ENCODE measurements at regions of chr19 and their contacts with region 1.

Region 1: GRCh38 chr19:12639901-12640613 is 26.5 kb downstream of the MAN2B1 start:
- DNase-seq: peak; percentile 92
- ATAC-seq: peak; percentile 94
- H3K4me3 Mint-ChIP-seq: peak overlapping the region; percentile 71
- H3K27ac Mint-ChIP-seq: no peak overlapping the region; the same call in 1 of the 2 replicates
- H3K4me1 Mint-ChIP-seq: 0 out of 2 replicates have a peak, but pooled peaks cover 4% of the 10 kb centered on the region
- H3K27me3 Mint-ChIP-seq: peaks cover 16% of the 10 kb centered on the region; the same call in 1 of the 2 replicates
- CTCF ChIP-seq: peak; percentile 82

Region 2: GRCh38 chr19:12450844-12451243 is 189.2 kb before region 1 on chr19:
- CTCF ChIA-PET with region 1: no interaction called
- POLR2A ChIA-PET with region 1: interaction called, 10 read pairs
- DNase-seq: no peak
- ATAC-seq: no peak
- H3K4me3 Mint-ChIP-seq: no peak overlapping the region
- H3K27ac Mint-ChIP-seq: no peak overlapping the region
- H3K4me1 Mint-ChIP-seq: peaks cover 19% of the 10 kb centered on the region
- H3K27me3 Mint-ChIP-seq: peaks cover 17% of the 10 kb centered on the region
- CTCF ChIP-seq: no peak

Region 3: GRCh38 chr19:12610540-12611360 is 29.3 kb before region 1 on chr19 and contains the starts of genes ZNF490 and ZNF791:
- CTCF ChIA-PET with region 1: interaction called, 20 read pairs
- POLR2A ChIA-PET with region 1: interaction called, 4 read pairs
- DNase-seq: peak; percentile 97
- ATAC-seq: peak; percentile 97
- H3K4me3 Mint-ChIP-seq: peak within 1 kb of the TSS; percentile 97
- H3K27ac Mint-ChIP-seq: peak within 1 kb of the TSS; percentile 99
- H3K4me1 Mint-ChIP-seq: peaks cover 3% of the 10 kb centered on the region
- H3K27me3 Mint-ChIP-seq: no peaks in the 10 kb centered on the region
- CTCF ChIP-seq: no peak
- total RNA-seq, gene ZNF490: 7.3 to 7.7 TPM (median 7.6 TPM) in 3 replicates
- total RNA-seq, gene ZNF791: 21.4 to 25.9 TPM (median 23.9 TPM) in 3 replicates

Region 4: DNA sequence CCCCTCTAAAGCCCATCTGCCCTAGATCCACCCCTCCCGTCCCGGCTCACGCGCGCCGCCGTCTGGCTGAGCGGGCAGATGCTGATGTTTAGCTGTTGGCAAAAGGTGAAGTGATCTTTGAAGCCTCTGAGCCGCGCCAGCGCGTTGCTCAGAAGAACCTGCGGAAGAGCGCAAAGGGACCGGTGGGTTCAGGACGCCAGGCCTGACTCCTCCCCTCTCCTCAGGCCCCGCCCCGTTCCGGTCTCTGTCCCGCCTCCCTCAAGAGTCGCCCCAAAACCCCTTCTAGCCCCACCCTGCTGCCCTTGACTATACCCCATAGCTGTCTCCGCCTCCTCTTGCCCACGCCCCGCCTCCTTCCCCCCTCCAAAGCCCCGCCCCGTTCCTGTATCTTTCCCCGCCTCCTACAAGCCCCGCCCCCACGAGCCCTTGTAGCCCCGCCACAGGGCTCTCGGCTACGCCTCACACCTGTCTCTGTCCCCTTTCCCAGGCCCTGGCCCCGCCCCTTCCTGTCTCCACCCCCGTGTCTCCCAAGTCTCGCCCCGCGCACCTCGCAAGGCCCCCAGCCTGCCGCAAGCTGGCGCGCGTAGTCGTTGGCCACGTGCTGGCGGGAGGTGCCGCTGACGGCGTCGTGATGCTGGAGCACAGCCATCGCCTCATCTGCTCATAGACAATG is 17.0 kb after region 1 on chr19:
- CTCF ChIA-PET with region 1: interaction called, 27 read pairs
- POLR2A ChIA-PET with region 1: no interaction called
- DNase-seq: peak; percentile 98
- ATAC-seq: peak; percentile 98
- H3K4me3 Mint-ChIP-seq: peak overlapping the region; percentile 56
- H3K27ac Mint-ChIP-seq: peak overlapping the region; percentile 86
- H3K4me1 Mint-ChIP-seq: peaks cover 6% of the 10 kb centered on the region
- H3K27me3 Mint-ChIP-seq: no peaks in the 10 kb centered on the region
- CTCF ChIP-seq: peak; percentile 18; the same call in 1 of the 2 replicates

Region 5: DNA sequence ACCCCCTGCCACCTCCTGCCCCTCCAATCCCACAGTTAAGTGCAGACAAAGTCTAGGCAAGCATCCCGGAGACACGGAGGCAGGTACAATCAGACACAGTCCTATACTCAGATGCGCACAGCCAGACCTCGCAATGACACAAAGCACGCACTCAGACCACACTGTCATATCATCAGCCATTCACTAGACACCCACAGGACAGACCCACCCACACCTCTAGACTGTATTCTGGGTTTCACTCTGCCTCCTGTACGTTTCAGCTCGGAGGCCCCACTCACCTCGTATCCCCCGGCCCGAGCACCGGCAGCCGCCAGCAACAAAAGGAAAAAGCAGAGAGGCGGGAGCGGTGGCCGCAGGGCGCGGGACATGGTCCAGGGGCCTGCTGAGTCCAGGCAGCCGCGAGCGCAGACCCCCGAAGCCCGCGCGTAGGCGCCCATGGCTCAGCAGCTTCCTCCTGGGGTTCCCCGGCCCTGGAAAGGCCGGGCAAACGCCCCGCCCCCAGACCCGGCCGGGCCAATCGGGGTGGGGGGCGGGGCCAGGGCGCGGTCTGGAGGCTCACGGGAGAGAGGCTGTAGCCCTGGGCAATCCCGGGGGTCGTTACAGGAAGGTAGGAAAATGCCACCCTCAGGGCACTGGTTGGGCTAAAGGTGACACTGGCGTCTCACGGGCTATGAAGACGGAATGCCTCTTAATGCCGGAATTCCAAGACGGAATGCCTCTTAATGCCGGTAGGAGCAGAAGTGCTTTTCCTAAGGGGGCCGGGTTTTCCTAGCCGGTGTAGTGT is 26.4 kb after region 1 on chr19 and contains the starts of genes MAN2B1 and WDR83:
- CTCF ChIA-PET with region 1: interaction called, 17 read pairs
- POLR2A ChIA-PET with region 1: interaction called, 5 read pairs
- DNase-seq: peak; percentile 84
- ATAC-seq: peak; percentile 72
- H3K4me3 Mint-ChIP-seq: peak within 1 kb of the TSS; percentile 98
- H3K27ac Mint-ChIP-seq: peak within 1 kb of the TSS; percentile 80
- H3K4me1 Mint-ChIP-seq: peaks cover 31% of the 10 kb centered on the region
- H3K27me3 Mint-ChIP-seq: no peaks in the 10 kb centered on the region
- CTCF ChIP-seq: no peak
- total RNA-seq, gene MAN2B1: 69.2 to 73.4 TPM (median 72.0 TPM) in 3 replicates
- total RNA-seq, gene WDR83: 21.8 to 26.3 TPM (median 23.7 TPM) in 3 replicates

Region 6: DNA sequence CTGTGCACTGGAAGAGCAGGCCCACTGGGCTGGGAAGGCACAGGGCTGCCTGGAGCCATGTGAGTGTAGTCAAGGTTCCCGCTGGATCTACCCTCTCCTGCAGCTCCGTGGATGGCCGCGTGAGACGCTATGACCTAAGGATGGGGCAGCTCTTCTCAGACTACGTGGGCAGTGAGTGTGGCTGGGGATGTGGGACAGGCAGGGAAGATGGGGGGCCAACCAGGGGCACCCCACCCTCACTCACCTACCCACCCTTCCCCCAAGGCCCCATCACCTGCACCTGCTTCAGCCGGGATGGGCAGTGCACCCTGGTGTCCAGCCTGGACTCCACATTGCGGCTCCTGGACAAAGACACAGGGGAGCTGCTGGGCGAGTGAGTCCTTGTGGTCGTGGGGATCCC is 32.7 kb after region 1 on chr19:
- CTCF ChIA-PET with region 1: interaction called, 17 read pairs
- POLR2A ChIA-PET with region 1: interaction called, 4 read pairs
- DNase-seq: no peak
- ATAC-seq: no peak
- H3K4me3 Mint-ChIP-seq: no peak overlapping the region
- H3K27ac Mint-ChIP-seq: no peak overlapping the region
- H3K4me1 Mint-ChIP-seq: peaks cover 17% of the 10 kb centered on the region
- H3K27me3 Mint-ChIP-seq: no peaks in the 10 kb centered on the region
- CTCF ChIP-seq: no peak

Region 7: DNA sequence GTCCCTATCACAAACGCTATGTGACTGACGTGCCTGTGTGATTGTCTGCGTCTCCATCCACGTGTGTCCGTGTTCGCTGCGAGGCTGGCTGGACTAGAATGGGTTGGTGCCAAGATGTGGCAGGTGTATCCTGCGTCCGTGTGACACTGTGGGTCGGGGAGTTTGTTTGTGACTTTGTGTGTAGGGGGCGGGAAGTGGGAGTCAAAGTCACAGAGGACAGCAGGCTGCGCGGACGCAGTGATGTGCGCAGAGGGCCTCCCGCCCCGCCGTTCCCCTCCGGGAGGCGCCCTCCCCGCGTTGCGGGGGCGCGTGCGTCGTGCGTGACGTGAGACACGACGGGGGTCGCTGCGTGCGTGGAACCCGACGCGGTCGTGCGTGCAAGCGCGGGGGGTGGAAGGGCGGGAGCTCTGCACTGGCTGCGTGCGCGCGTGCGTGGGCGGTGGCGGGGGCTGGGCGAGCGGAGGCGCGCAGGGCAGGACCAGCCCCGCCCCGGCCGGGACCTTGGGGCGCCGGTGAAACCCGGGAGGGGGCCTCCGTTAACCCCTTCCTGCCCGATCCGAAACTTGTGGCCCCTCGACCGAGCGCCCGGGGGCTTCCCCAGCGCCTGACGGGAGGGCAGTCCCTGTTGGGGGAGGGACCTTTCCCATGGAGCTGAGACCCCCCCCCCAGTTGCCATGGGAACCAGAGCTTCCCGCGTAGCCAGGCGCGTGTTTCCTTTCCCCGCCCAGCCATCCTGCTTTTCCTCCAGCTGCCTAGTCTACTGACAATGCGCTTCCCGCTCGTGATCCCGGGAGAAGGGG is 142.4 kb after region 1 on chr19:
- CTCF ChIA-PET with region 1: no interaction called
- POLR2A ChIA-PET with region 1: no interaction called
- DNase-seq: peak; percentile 63
- ATAC-seq: no peak
- H3K4me3 Mint-ChIP-seq: peak overlapping the region; percentile 77
- H3K27ac Mint-ChIP-seq: peak overlapping the region; percentile 92
- H3K4me1 Mint-ChIP-seq: peaks cover 19% of the 10 kb centered on the region
- H3K27me3 Mint-ChIP-seq: no peaks in the 10 kb centered on the region; the same call in 1 of the 2 replicates
- CTCF ChIP-seq: no peak